ENCODE measurements at regions of chr22 and their contacts with region 1.

Region 1: GRCh38 chr22:44913198-44913983 is 96.4 kb downstream of the PHF21B start:
- DNase-seq: no peak
- H3K4me3 ChIP-seq: no peak overlapping the region
- H3K27ac ChIP-seq: no peak overlapping the region
- H3K4me1 ChIP-seq: no peaks in the 10 kb centered on the region
- H3K27me3 ChIP-seq: no peaks in the 10 kb centered on the region
- CTCF ChIP-seq: no peak

Region 2: GRCh38 chr22:44878483-44879300 is 34.7 kb before region 1 on chr22:
- CTCF ChIA-PET with region 1: no interaction called
- POLR2A ChIA-PET with region 1: interaction called, 11 read pairs
- intact Hi-C with region 1: no loop called
- DNase-seq: no peak
- H3K4me3 ChIP-seq: no peak overlapping the region
- H3K27ac ChIP-seq: no peak overlapping the region
- H3K4me1 ChIP-seq: no peaks in the 10 kb centered on the region
- H3K27me3 ChIP-seq: no peaks in the 10 kb centered on the region
- CTCF ChIP-seq: no peak

Region 3: DNA sequence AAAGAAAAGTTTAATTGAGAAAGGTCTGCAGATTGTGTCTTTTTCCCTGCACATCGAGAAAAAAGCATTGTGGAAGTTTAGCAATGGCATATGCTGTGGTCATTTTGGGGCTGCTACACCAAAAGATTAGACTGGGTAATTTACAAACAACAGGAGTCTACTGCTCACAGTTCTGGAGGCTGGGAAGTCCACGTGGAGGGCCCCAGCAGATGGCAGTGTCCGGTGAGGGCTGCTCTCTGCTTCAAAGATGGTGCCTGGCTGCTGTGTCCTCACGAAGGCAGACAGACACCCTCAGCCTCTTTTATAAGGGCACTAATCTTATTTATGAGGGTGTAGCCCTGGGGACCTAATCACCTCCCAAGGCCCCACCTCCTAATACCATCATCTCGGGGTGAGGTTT is 75.3 kb after region 1 on chr22:
- CTCF ChIA-PET with region 1: no interaction called
- POLR2A ChIA-PET with region 1: no interaction called
- intact Hi-C with region 1: no loop called
- DNase-seq: no peak
- H3K4me3 ChIP-seq: no peak overlapping the region
- H3K27ac ChIP-seq: no peak overlapping the region
- H3K4me1 ChIP-seq: no peaks in the 10 kb centered on the region
- H3K27me3 ChIP-seq: no peaks in the 10 kb centered on the region
- CTCF ChIP-seq: no peak

Measured in A673 (cell line).